ENCODE measurements at regions of chr1 and their contacts with region 1.

Region 1: GRCh38 chr1:53992085-53992874 is 25.7 kb downstream of the LDLRAD1 start:
- DNase-seq: peak; percentile 23
- ATAC-seq: no peak
- H3K4me3 Mint-ChIP-seq: no peak overlapping the region
- H3K27ac Mint-ChIP-seq: no peak overlapping the region
- H3K4me1 Mint-ChIP-seq: peaks cover 8% of the 10 kb centered on the region
- H3K27me3 Mint-ChIP-seq: peaks cover 1% of the 10 kb centered on the region

Region 2: GRCh38 chr1:53968125-53968513 is 24.2 kb before region 1 on chr1:
- CTCF ChIA-PET with region 1: no interaction called
- POLR2A ChIA-PET with region 1: interaction called, 14 read pairs
- intact Hi-C with region 1: no loop called
- DNase-seq: no peak
- ATAC-seq: no peak
- H3K4me3 Mint-ChIP-seq: no peak overlapping the region
- H3K27ac Mint-ChIP-seq: no peak overlapping the region
- H3K4me1 Mint-ChIP-seq: peaks cover 4% of the 10 kb centered on the region
- H3K27me3 Mint-ChIP-seq: no peaks in the 10 kb centered on the region

Measured in activated CD4-positive, alpha-beta T cell treated with anti-CD3 and anti-CD28 coated beads for 36 hours (primary cell).